Mammary epithelial cell (primary cell): ENCODE measurements at regions of chr5 and their contacts with region 1.

Region 1: GRCh38 chr5:56200856-56201666 is 32.1 kb downstream of the ANKRD55 start:
- DNase-seq: peak; percentile 58
- H3K4me3 ChIP-seq: no peak overlapping the region
- H3K27ac ChIP-seq: no peak overlapping the region
- H3K4me1 ChIP-seq: no peaks in the 10 kb centered on the region
- H3K27me3 ChIP-seq: no peaks in the 10 kb centered on the region
- CTCF ChIP-seq: peak; percentile 67 to 84

Region 2: DNA sequence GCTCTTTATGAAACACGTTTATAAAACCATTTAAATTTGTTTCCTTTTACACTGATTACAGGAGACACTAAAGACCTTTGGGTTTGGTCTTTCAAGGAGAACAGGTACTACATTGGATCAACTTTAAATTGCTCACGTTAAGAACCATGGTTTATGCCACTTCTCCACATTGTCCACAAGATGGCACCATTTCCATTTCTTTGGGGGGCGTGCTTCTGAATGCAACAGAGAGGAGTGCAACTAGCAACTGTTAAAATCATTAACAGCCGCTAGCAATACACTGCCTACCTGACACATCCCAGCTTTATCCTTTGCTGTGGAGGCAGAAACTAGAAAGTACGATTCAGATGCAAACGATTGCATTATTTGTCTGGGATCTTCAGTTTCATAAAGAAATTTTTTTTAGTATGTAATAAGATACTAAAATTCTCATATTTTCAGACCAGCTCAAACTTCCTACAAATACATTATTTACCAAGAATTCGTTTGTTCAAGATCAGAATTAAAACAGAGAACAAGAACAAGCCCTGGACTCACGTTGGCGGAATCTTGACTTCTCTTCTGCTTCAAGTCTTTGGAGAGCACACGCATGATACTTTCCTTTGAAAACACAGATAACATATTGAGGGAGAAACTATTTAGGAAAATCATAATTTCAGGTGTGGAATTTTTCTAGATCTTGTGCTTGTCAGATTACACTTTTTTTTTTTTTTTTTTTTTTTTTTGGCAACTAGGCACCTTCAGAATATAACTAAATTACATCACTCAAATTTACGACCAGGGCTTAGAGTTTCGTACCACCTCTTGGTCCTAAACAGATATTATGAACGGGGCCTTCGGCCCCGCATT is 1028.8 kb before region 1 on chr5:
- CTCF ChIA-PET with region 1: no interaction called
- dilution Hi-C with region 1: no loop called
- in situ Hi-C with region 1: no loop called
- intact Hi-C with region 1: loop called (anchors 2 kb)
- DNase-seq: peak; percentile 81
- H3K4me3 ChIP-seq: peak overlapping the region; percentile 55 to 81 (median 62)
- H3K27ac ChIP-seq: peak overlapping the region; percentile 35
- H3K4me1 ChIP-seq: peaks cover 31% of the 10 kb centered on the region
- H3K27me3 ChIP-seq: no peaks in the 10 kb centered on the region
- CTCF ChIP-seq: peak; percentile 81

Region 3: DNA sequence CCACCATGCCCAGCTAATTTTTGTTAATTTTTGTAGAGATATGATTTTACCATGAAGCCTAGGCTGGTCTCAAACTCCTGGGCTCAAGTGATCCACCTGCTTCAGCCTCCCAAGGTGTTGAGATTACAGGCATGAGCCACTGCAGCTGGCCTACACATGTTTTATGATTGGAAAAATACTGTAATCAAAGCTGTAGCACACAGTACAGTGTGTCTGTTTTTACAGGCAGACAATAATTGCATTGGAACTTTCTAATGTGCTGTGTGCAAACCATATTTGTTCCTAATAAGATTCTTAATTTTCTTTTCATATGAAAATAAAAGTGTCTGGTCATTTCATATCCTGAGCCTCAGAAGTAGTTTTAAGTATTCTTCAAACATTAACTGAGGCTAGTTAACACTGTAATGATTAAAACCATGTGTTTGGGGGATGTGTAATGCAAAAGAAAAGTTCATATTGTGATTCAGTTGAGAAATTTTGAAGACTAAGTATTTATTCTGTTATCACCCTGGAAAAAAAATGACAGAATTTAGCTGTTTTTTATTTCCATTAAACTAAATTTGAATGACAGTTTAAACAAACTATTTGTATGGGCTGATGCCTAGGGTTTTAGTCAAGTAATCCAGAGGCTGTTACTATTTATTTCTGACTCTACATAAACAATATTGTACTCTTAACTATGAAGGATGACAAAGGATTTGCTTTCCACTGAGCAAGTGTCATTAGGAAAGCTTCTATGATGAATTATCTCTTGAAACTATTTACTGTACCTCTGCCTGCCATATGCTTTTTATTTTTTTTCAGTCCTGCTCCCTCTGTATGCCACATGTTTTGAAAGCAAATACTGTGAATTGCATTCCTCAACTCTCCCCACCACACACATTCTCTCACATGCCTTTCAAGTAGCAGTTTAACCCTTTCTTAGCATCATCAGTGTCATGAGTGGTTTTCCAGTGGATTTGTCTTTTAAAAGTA is 781.8 kb before region 1 on chr5:
- CTCF ChIA-PET with region 1: interaction called, 11 read pairs
- dilution Hi-C with region 1: no loop called
- in situ Hi-C with region 1: no loop called
- intact Hi-C with region 1: no loop called
- DNase-seq: no peak
- H3K4me3 ChIP-seq: no peak overlapping the region
- H3K27ac ChIP-seq: no peak overlapping the region
- H3K4me1 ChIP-seq: no peaks in the 10 kb centered on the region
- H3K27me3 ChIP-seq: no peaks in the 10 kb centered on the region
- CTCF ChIP-seq: no peak

Region 4: DNA sequence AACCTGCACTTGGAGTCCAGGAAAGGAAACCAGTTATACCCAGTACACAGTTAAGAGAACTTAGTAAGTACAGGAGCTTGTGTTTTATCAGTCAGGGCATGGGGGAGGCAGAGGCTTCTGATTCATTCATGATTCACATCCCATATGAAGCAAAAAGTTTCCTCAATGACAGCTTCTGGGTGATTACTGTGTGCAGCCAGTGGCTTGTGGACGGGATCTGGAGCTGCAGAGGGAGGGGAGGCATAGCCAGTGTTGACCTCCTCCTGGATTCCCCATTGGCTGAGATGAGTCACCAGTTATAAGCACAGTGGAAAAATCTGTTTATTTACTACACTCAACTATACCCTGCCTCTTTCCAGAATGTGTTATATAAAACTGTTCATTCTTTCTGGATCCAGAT is 332.2 kb before region 1 on chr5:
- CTCF ChIA-PET with region 1: no interaction called
- dilution Hi-C with region 1: no loop called
- in situ Hi-C with region 1: no loop called
- intact Hi-C with region 1: loop called (anchors 5 kb)
- DNase-seq: peak; percentile 99
- H3K4me3 ChIP-seq: no peak overlapping the region
- H3K27ac ChIP-seq: peak overlapping the region; percentile 42
- H3K4me1 ChIP-seq: peaks cover 17% of the 10 kb centered on the region
- H3K27me3 ChIP-seq: no peaks in the 10 kb centered on the region
- CTCF ChIP-seq: no peak

Region 5: GRCh38 chr5:55982957-55983381 is 218.1 kb before region 1 on chr5:
- CTCF ChIA-PET with region 1: no interaction called
- dilution Hi-C with region 1: no loop called
- in situ Hi-C with region 1: loop called in 1 of 2 experiments (anchors 10 kb)
- intact Hi-C with region 1: loop called (anchors 1 kb)
- DNase-seq: no peak
- H3K4me3 ChIP-seq: no peak overlapping the region
- H3K27ac ChIP-seq: no peak overlapping the region
- H3K4me1 ChIP-seq: peaks cover 1% of the 10 kb centered on the region
- H3K27me3 ChIP-seq: no peaks in the 10 kb centered on the region
- CTCF ChIP-seq: peak in 1 of 2 donors; percentile 43

Region 6: DNA sequence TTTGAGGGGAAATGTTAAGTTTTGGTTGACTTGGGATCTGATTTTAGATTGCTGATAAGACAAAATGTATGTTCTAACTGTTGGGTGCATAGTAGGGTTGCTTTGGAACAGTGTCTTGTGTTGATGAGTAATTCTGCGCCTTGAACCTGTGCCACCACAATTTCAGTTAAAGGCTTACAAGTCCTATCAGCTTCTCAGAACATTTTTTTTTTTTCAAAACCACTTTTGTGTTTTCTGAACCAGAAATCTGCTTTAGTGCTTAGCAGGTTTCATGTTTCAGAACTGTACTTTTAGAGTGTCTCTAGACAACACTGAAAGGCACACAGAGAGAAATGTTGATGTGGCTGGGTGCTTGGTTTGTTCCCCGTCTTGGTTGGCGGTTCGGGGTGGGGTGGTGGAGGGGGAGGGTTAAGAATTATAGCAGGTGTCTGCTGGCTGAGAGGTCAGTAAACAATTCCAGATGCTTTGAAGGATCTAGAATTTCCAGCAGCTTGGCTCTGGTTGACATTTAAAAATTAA is 52.5 kb before region 1 on chr5:
- CTCF ChIA-PET with region 1: no interaction called
- dilution Hi-C with region 1: no loop called
- in situ Hi-C with region 1: no loop called
- intact Hi-C with region 1: no loop called
- DNase-seq: no peak
- H3K4me3 ChIP-seq: no peak overlapping the region
- H3K27ac ChIP-seq: no peak overlapping the region
- H3K4me1 ChIP-seq: peaks cover 12% of the 10 kb centered on the region
- H3K27me3 ChIP-seq: no peaks in the 10 kb centered on the region
- CTCF ChIP-seq: no peak